Right ventricle myocardium inferior (tissue), 1 donor: ENCODE measurements at regions of chr10 and their contacts with region 1.

Region 1: GRCh38 chr10:125982260-125982948 is 86.0 kb downstream of the FANK1 start:
- DNase-seq: no peak
- ATAC-seq: peak; percentile 47

Region 2: GRCh38 chr10:126302826-126303665 is 320.6 kb after region 1 on chr10:
- intact Hi-C with region 1: loop called (anchors 10 kb)
- DNase-seq: no peak
- ATAC-seq: no peak

Region 3: GRCh38 chr10:126387023-126387921 is 404.9 kb after region 1 on chr10:
- intact Hi-C with region 1: loop called (anchors 2 kb)
- DNase-seq: peak; percentile 75
- ATAC-seq: no peak

Region 4: DNA sequence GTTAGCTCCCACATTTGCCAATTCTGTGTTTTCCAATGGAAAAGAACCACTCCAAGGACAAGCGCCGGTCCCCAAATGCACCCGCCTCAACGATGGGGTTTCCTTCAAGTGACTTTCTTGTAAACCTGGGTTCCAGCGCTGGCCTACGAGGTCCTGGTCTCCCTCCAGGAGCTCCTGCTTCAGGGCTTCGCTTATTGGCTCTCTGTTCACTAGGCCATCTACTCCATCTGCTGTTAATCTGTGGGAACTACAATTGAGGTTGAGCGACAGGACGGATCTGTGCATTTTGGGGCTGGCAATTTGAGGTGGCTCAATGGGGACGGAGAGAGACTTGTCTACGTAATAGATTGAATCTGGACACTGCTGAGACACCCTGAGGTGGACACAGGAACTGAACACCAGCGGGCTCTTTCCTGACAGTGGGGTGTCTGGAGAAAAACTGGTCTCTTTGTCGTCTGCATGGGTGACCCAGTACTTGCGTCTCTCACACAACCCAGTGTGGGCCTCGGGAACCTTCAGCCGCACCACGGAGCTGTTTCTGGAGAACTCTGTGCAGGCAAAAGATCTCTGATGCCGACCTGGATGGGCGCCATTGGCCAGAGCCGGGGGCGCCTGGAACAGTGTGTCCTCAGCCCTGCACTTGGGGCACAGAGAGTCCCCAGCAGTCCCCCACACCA is 521.8 kb after region 1 on chr10:
- intact Hi-C with region 1: loop called (anchors 2 kb)
- DNase-seq: no peak
- ATAC-seq: peak; percentile 44

Region 5: DNA sequence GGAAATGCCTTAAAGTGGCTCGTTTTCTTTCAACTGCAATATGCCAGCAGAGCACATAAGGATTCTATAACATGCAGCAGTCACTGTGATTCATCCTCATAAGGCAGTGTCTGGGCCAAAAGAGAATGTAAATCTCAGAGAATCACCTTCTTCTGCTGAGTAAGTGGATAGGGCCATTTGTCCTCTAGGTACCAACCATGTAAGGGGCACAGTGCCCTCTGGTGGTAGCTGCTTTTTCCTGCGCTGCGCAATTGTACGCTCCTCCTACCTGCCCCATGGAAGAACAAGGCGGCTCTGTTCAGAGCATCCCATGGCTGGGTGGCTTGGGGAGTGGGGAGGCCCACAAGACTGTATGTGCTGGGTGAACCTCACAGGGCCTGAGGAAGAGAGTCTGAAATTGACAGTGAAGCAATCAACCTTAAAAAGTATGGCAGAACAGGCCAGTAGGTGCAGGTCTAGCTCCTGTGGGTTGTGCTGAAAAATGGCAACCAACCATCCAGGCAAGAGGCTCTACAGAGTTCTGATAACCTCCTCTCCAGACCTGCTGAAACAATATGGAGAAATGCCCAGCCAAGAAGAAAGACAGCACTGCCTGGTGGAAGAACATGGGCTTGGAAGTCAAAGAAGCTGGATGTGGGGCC is 766.7 kb after region 1 on chr10:
- intact Hi-C with region 1: loop called (anchors 5 kb)
- DNase-seq: peak; percentile 68
- ATAC-seq: no peak

Region 6: DNA sequence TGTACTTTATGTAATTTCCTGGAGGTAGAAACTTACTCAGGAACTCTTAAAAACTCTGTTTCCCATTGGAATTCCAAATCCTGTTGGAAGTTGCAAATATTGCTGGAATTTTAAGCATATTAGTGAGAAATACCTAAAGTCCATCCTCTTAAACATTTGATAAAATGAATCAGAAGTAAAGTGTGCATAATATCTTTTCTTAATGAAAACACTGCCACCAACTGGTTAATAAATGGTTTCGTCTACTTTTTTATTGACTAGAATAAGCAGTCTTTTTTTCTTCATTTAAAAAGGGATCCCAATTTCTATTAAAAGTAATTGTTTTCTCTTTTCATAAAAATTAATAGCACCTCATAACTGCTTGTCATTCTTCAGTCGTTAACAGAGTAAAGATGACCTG is 1595.0 kb after region 1 on chr10:
- intact Hi-C with region 1: loop called (anchors 10 kb)
- DNase-seq: no peak
- ATAC-seq: no peak

Region 7: GRCh38 chr10:127853868-127854768 is 1871.7 kb after region 1 on chr10:
- intact Hi-C with region 1: loop called (anchors 10 kb)
- DNase-seq: no peak
- ATAC-seq: peak; percentile 86